OCI-LY7 (cell line): ENCODE measurements at regions of chr13 and their contacts with region 1.

Region 1: GRCh38 chr13:84962141-84962750 is 837.0 kb downstream of the SLITRK6 start:
- DNase-seq: peak; percentile 75
- H3K4me3 ChIP-seq: no peak overlapping the region
- H3K27ac ChIP-seq: no peak overlapping the region
- H3K4me1 ChIP-seq: peaks cover 17% of the 10 kb centered on the region
- CTCF ChIP-seq: no peak

Region 2: DNA sequence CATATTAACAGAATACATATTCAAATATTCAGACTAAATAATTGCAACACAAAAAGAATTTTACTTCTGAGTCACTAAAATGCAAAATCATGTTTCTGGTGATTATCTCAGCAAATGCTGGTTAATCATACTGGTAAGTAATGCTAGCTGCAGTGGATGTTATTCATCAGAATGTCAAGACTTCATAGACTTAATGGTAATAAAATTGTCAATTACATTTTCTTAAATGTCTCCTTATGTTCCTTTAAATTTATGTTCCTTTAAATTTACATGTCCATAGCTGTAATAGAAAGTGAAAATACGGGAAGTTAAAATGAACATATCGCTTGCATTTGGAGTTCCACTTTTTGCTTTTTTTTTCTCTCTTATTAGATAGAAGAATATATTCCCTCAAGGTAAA is 16.1 kb before region 1 on chr13:
- CTCF ChIA-PET with region 1: no interaction called
- POLR2A ChIA-PET with region 1: interaction called, 10 read pairs
- intact Hi-C with region 1: no loop called
- DNase-seq: no peak
- H3K4me3 ChIP-seq: no peak overlapping the region
- H3K27ac ChIP-seq: no peak overlapping the region
- H3K4me1 ChIP-seq: no peaks in the 10 kb centered on the region
- CTCF ChIP-seq: no peak

Region 3: DNA sequence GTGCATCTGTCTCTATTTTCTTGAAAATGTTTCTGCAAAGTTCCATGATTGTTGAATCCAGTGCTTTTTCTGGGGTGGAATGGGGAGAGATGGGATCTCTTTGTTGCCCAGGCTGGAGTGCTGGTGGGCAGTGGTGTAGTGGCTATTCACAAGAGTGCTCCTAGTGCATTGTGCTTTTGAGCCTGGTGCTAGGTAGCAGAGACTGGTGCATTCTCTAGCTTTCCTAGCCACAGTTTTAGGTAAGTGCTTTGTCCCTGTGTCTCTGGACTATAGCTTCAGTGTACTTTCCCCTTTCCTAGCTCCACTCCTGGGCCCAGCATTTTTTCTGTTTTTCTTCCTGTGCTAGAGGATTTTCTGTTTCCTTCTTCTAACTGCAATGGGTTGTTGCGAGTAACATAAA is 11.4 kb after region 1 on chr13:
- CTCF ChIA-PET with region 1: no interaction called
- POLR2A ChIA-PET with region 1: interaction called, 10 read pairs
- intact Hi-C with region 1: no loop called
- DNase-seq: peak; percentile 41
- H3K4me3 ChIP-seq: peak overlapping the region; percentile 8
- H3K27ac ChIP-seq: peak overlapping the region; percentile 47
- H3K4me1 ChIP-seq: peaks cover 40% of the 10 kb centered on the region
- CTCF ChIP-seq: no peak

Region 4: DNA sequence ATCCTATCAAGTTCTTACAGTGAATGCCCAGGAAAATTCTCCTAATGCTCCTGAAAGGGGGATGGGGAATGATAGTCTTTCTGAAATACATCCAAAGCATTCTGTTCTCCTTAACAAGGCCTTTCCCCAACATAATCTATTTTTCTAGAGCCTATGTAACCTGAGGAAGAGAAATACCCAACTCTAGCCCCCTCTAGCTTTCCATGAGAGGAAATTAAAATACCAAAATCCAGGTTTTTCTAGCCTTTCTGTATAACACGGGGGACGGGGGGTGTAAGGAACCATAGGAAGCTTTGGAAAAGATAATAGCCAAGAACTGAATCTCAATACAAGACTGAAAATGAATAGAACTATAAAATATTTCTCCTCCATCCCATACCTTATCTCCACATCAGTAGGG is 21.1 kb after region 1 on chr13:
- CTCF ChIA-PET with region 1: no interaction called
- POLR2A ChIA-PET with region 1: interaction called, 20 read pairs
- intact Hi-C with region 1: no loop called
- DNase-seq: no peak
- H3K4me3 ChIP-seq: no peak overlapping the region
- H3K27ac ChIP-seq: no peak overlapping the region
- H3K4me1 ChIP-seq: peaks cover 39% of the 10 kb centered on the region
- CTCF ChIP-seq: peak; percentile 54